ENCODE measurements at regions of chr16 and their contacts with region 1.

Region 1: GRCh38 chr16:84484579-84485254 is 19.7 kb downstream of the MEAK7 start:
- DNase-seq: no peak
- H3K4me3 ChIP-seq: no peak overlapping the region
- CTCF ChIP-seq: peak; percentile 67

Region 2: DNA sequence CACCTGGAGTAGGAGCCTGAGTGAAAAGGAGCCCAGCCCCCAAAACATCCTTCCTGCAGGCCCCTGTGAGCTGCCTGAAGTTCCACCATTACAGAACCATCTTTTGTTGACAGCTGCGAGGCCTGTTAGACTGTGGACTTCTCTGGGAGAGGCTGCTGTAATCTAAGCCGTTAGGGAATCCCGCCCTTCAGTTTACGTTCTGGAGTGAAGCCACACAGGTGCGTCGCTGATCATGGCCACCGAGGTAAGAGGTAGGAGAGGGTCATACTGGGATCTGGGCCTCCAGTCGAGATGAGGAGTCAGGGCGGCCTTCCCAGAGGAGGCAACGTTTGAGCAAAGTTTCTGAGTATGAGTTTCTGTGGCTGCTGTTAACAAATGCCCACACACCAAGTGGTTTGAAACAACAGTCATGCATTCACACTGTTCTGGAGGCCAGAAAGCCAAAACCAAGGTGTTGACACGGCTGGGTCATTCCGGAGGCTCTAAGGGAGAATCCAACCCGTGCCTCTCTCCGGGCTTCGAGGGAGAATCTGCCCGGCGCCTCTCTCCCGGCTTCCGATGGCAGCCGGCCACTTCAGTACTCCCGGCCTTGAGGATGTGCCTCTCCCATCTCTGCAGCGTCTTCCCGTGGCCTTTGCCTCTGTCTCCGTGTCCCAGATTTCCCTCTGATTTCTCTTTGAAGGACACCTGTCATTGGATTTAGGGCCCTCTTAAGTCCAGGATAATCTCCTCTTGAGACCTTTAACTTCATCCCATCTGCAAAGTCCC is 143.0 kb before region 1 on chr16:
- CTCF ChIA-PET with region 1: no interaction called
- POLR2A ChIA-PET with region 1: no interaction called
- DNase-seq: no peak
- H3K4me3 ChIP-seq: no peak overlapping the region
- CTCF ChIP-seq: no peak

Region 3: GRCh38 chr16:84459941-84460405 is 24.7 kb before region 1 on chr16:
- CTCF ChIA-PET with region 1: no interaction called
- POLR2A ChIA-PET with region 1: no interaction called
- DNase-seq: no peak
- H3K4me3 ChIP-seq: no peak overlapping the region
- CTCF ChIP-seq: no peak

Region 4: GRCh38 chr16:84498859-84499620 is 14.3 kb after region 1 on chr16:
- CTCF ChIA-PET with region 1: interaction called, 40 read pairs
- POLR2A ChIA-PET with region 1: interaction called, 4 read pairs
- DNase-seq: no peak
- H3K4me3 ChIP-seq: no peak overlapping the region
- CTCF ChIP-seq: no peak

Region 5: GRCh38 chr16:84643180-84643583 is 158.5 kb after region 1 on chr16:
- CTCF ChIA-PET with region 1: no interaction called
- POLR2A ChIA-PET with region 1: no interaction called
- DNase-seq: peak; percentile 64
- H3K4me3 ChIP-seq: no peak overlapping the region
- CTCF ChIP-seq: no peak

Region 6: GRCh38 chr16:84699147-84699711 is 214.5 kb after region 1 on chr16:
- CTCF ChIA-PET with region 1: no interaction called
- POLR2A ChIA-PET with region 1: no interaction called
- DNase-seq: no peak
- H3K4me3 ChIP-seq: peak overlapping the region; percentile 77
- CTCF ChIP-seq: no peak